HCT116 (cell line): ENCODE measurements at regions of chr4 and their contacts with region 1.

Region 1: GRCh38 chr4:3442959-3443749 is 1.4 kb downstream of the HGFAC start:
- DNase-seq: no peak
- ATAC-seq: peak; percentile 91
- H3K4me3 ChIP-seq: no peak overlapping the region
- H3K27ac ChIP-seq: no peak overlapping the region
- H3K4me1 ChIP-seq: peaks cover 7 to 16% of the 10 kb centered on the region in 2 experiments; a peak in 2 of 4 replicates
- H3K27me3 ChIP-seq: no peaks in the 10 kb centered on the region
- CTCF ChIP-seq: peak in 2 of 3 experiments; percentile 92 to 94; a peak in 4 of 6 replicates
- POLR2A ChIP-seq: no peak
- RAD21 ChIP-seq: no peak

Region 2: DNA sequence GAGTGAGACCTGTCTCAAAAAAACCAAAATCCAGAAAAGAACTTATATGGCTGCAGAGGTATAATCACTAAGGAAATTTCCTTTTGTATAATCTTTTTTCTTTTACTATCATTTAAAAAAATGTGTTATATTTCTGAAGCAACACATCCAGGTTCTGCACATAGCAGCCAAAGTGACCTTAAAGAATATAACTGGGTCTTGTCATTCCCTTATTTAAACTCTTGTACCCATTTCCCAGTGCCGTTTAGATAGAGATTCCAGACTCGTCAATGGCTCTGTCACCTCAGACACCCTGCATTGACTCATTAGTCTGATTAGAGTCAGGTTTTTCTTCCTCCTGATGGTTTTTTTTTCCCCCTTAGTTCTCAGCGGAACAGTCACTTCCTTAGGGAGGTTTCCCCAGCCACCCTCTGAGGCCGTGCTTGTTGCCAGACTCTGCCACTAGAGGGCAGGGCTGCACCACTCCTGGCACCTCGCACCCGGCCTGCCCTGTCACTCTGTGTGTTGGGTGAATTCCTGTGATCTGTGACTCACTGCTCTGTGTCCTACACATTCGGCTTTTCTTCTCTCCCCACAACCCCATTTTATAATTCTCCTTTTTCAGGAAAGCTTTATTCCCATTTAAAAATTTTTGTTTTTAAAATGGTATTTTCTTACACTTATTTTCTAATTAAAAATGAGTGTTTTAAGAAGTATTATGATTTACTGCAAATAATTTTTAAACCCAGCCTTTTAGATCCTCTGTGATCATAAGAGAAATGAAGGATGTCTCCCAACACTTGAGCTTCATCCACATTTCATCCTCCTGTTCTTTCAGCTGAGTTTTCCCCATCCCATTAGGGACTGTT is 336.6 kb before region 1 on chr4:
- CTCF ChIA-PET with region 1: interaction called, 7 read pairs
- POLR2A ChIA-PET with region 1: no interaction called
- RAD21 ChIA-PET with region 1: no interaction called
- intact Hi-C with region 1: loop called (anchors 2 kb)
- DNase-seq: peak; percentile 55
- ATAC-seq: peak; percentile 100
- H3K4me3 ChIP-seq: no peak overlapping the region
- H3K27ac ChIP-seq: no peak overlapping the region
- H3K4me1 ChIP-seq: peaks cover 0 to 9% of the 10 kb centered on the region in 2 experiments; a peak in 1 of 4 replicates
- H3K27me3 ChIP-seq: no peaks in the 10 kb centered on the region
- CTCF ChIP-seq: peak; percentile 76 to 96 (median 95)
- POLR2A ChIP-seq: no peak
- RAD21 ChIP-seq: peak; percentile 90

Region 3: GRCh38 chr4:3145234-3145924 is 297.8 kb before region 1 on chr4:
- CTCF ChIA-PET with region 1: interaction called, 3 read pairs
- POLR2A ChIA-PET with region 1: no interaction called
- RAD21 ChIA-PET with region 1: no interaction called
- intact Hi-C with region 1: loop called (anchors 1 kb)
- DNase-seq: no peak
- ATAC-seq: no peak
- H3K4me3 ChIP-seq: no peak overlapping the region
- H3K27ac ChIP-seq: no peak overlapping the region
- H3K4me1 ChIP-seq: no peaks in the 10 kb centered on the region
- H3K27me3 ChIP-seq: no peaks in the 10 kb centered on the region
- CTCF ChIP-seq: peak in 2 of 3 experiments; percentile 17 to 35; a peak in 3 of 6 replicates
- POLR2A ChIP-seq: no peak
- RAD21 ChIP-seq: peak; percentile 40; the same call in 1 of the 2 replicates

Region 4: DNA sequence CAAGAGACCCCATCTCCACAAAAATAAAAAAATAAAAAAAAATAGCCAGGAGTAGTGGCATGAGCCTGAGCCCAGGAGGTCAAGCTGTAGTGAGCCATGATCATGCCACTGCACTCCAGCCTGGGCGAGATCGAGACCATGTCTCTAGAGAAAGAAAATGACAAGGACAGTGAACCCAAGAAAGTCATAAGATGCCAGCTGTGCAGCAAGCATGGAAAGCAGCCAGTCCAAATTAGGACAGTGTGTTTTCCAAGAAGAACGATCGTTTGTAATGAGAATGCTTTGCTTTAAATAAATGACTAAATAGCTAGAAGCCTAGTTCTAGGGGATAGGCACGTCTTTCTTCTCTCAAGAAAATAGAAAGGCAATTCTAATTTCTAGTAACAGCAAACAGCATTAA is 252.6 kb before region 1 on chr4:
- CTCF ChIA-PET with region 1: no interaction called
- POLR2A ChIA-PET with region 1: no interaction called
- RAD21 ChIA-PET with region 1: no interaction called
- intact Hi-C with region 1: loop called (anchors 2 kb)
- DNase-seq: no peak
- ATAC-seq: no peak
- H3K4me3 ChIP-seq: no peak overlapping the region
- H3K27ac ChIP-seq: no peak overlapping the region
- H3K4me1 ChIP-seq: no peaks in the 10 kb centered on the region
- H3K27me3 ChIP-seq: no peaks in the 10 kb centered on the region
- CTCF ChIP-seq: no peak
- POLR2A ChIP-seq: no peak
- RAD21 ChIP-seq: no peak

Region 5: GRCh38 chr4:3346146-3346545 is 97.0 kb before region 1 on chr4:
- CTCF ChIA-PET with region 1: interaction called, 7 read pairs
- POLR2A ChIA-PET with region 1: no interaction called
- RAD21 ChIA-PET with region 1: no interaction called
- intact Hi-C with region 1: loop called (anchors 1 kb)
- DNase-seq: peak; percentile 47
- ATAC-seq: peak; percentile 96
- H3K4me3 ChIP-seq: no peak overlapping the region
- H3K27ac ChIP-seq: no peak overlapping the region
- H3K4me1 ChIP-seq: no peaks in the 10 kb centered on the region
- H3K27me3 ChIP-seq: no peaks in the 10 kb centered on the region
- CTCF ChIP-seq: peak; percentile 76 to 90 (median 80)
- POLR2A ChIP-seq: no peak
- RAD21 ChIP-seq: peak; percentile 82